Adrenal gland (tissue), 19 donors: ENCODE measurements at regions of chr2 and their contacts with region 1.

Region 1: GRCh38 chr2:158432117-158432516 is 24.4 kb downstream of the CCDC148 start:
- DNase-seq: no peak
- H3K4me3 ChIP-seq: no peak overlapping the region
- H3K27ac ChIP-seq: no peak overlapping the region
- H3K4me1 ChIP-seq: no peaks in the 10 kb centered on the region
- H3K27me3 ChIP-seq: no peaks in the 10 kb centered on the region
- CTCF ChIP-seq: no peak
- POLR2A ChIP-seq: no peak

Region 2: DNA sequence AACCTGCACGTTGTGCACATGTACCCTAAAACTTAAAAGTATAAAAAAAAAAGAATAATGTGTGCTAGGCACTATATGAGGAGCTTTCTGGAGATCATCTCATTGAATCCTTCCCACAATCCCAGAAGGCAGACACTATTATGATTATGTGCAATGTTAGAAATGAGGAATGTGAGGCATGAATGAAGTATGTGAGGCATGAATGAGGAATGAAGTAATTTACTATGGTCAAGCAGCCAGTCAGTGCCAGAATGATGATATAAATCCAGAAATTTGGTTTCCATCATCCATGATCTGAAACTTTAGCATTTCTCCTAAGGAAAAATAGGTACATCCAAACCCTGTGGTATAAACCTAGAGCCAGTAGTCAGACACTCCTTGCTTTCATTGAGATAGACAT is 17.6 kb before region 1 on chr2:
- intact Hi-C with region 1: loop called in 1 of 2 experiments (anchors 2 kb)
- DNase-seq: no peak
- H3K4me3 ChIP-seq: no peak overlapping the region
- H3K27ac ChIP-seq: no peak overlapping the region
- H3K4me1 ChIP-seq: no peaks in the 10 kb centered on the region
- H3K27me3 ChIP-seq: no peaks in the 10 kb centered on the region
- CTCF ChIP-seq: no peak
- POLR2A ChIP-seq: no peak

Region 3: GRCh38 chr2:158600155-158600802 is 168.2 kb after region 1 on chr2:
- intact Hi-C with region 1: no loop called
- DNase-seq: peak; percentile 38 to 85 (median 66)
- H3K4me3 ChIP-seq: no peak overlapping the region
- H3K27ac ChIP-seq: peak overlapping the region in 1 of 5 donors; percentile 12
- H3K4me1 ChIP-seq: peaks cover 0 to 14% of the 10 kb centered on the region in 2 donors
- H3K27me3 ChIP-seq: no peaks in the 10 kb centered on the region
- CTCF ChIP-seq: no peak
- POLR2A ChIP-seq: no peak